CD4-positive, alpha-beta memory T cell (primary cell): ENCODE measurements at regions of chr6 and their contacts with region 1.

Region 1: GRCh38 chr6:31665501-31666336 is at the start of gene CSNK2B:
- DNase-seq: peak; percentile 97 to 99 (median 98)
- H3K4me3 ChIP-seq: peak within 1 kb of the TSS; percentile 94 to 96
- H3K4me3 Mint-ChIP-seq: peak within 1 kb of the TSS; percentile 89 to 100 (median 96)
- H3K27ac ChIP-seq: peak within 1 kb of the TSS; percentile 92
- H3K27ac Mint-ChIP-seq: peak within 1 kb of the TSS; percentile 94 to 100 (median 99)
- H3K4me1 ChIP-seq: peaks cover 59% of the 10 kb centered on the region
- H3K4me1 Mint-ChIP-seq: peaks cover 32 to 67% (median 49%) of the 10 kb centered on the region in 4 donors
- H3K27me3 ChIP-seq: no peaks in the 10 kb centered on the region
- H3K27me3 Mint-ChIP-seq: no peaks in the 10 kb centered on the region
- total RNA-seq, gene CSNK2B: 141 to 148 TPM

Region 2: GRCh38 chr6:31546962-31547726 is 118.6 kb before region 1 on chr6 and contains the start of gene NFKBIL1:
- CTCF ChIA-PET with region 1: interaction called, 3 read pairs
- POLR2A ChIA-PET with region 1: interaction called, 10 read pairs
- intact Hi-C with region 1: loop called (anchors 1 kb)
- DNase-seq: peak; percentile 83 to 91 (median 85)
- H3K4me3 ChIP-seq: peak within 1 kb of the TSS; percentile 55 to 79
- H3K4me3 Mint-ChIP-seq: peak within 1 kb of the TSS; percentile 85 to 93 (median 88)
- H3K27ac ChIP-seq: peak within 1 kb of the TSS; percentile 85
- H3K27ac Mint-ChIP-seq: peak within 1 kb of the TSS; percentile 93 to 99 (median 97)
- H3K4me1 ChIP-seq: peaks cover 45% of the 10 kb centered on the region
- H3K4me1 Mint-ChIP-seq: peaks cover 24 to 49% (median 36%) of the 10 kb centered on the region in 4 donors
- H3K27me3 ChIP-seq: no peaks in the 10 kb centered on the region
- H3K27me3 Mint-ChIP-seq: no peaks in the 10 kb centered on the region
- total RNA-seq, gene NFKBIL1: 9.8 to 13.3 TPM

Region 3: GRCh38 chr6:31702819-31703522 is 37.3 kb after region 1 on chr6 and contains the start of gene ABHD16A:
- CTCF ChIA-PET with region 1: no interaction called
- POLR2A ChIA-PET with region 1: interaction called, 15 read pairs
- intact Hi-C with region 1: loop called (anchors 1 kb)
- DNase-seq: peak; percentile 96 to 98 (median 97)
- H3K4me3 ChIP-seq: peak within 1 kb of the TSS; percentile 70 to 82
- H3K4me3 Mint-ChIP-seq: peak within 1 kb of the TSS; percentile 97 to 99 (median 98)
- H3K27ac ChIP-seq: peak within 1 kb of the TSS; percentile 97
- H3K27ac Mint-ChIP-seq: peak within 1 kb of the TSS; percentile 93 to 99 (median 98)
- H3K4me1 ChIP-seq: peaks cover 28% of the 10 kb centered on the region
- H3K4me1 Mint-ChIP-seq: peaks cover 21 to 44% (median 34%) of the 10 kb centered on the region in 4 donors
- H3K27me3 ChIP-seq: no peaks in the 10 kb centered on the region
- H3K27me3 Mint-ChIP-seq: no peaks in the 10 kb centered on the region
- total RNA-seq, gene ABHD16A: 66.0 to 69.2 TPM

Region 4: DNA sequence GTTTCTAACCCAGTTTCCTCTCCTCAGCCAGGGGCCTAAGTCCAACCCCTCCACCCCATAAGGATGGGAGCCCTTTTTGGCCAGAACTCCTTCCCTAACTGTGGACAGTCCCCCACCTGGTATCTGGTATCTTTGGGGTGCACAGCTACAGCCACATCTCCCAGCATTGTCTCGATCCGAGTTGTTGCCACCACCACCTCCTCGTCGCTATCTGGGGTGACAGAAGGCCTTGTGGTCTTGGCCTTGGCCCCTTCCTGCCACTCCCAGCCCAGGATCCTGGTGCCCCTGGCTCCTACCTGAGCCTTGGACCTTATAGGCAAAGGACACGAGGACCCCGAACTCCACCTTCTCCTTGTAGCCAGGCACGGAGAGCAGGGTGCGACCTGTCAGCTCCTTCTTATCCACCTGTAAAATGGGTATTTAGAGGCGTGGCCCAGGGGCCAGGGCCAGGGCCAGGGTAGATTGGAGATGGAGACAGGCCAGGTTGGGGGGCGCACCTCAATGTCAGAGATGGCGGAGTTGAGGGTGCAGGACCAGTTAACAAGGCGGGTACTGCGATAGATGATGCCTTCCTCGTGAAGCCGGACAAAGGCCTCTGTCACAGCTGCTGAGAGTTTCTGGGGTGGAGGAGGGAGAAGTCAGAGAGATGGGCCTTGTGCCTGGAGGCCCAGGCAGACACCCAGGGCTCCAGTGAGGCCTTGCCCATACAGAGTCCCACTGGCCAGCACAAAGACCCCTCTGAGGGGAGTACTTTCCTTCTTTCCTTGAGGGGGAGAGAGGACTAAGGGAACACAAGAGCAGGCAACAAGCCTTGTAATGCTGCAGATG is 118.6 kb after region 1 on chr6:
- CTCF ChIA-PET with region 1: no interaction called
- POLR2A ChIA-PET with region 1: no interaction called
- intact Hi-C with region 1: no loop called
- DNase-seq: no peak
- H3K4me3 ChIP-seq: no peak overlapping the region
- H3K4me3 Mint-ChIP-seq: no peak overlapping the region
- H3K27ac ChIP-seq: no peak overlapping the region
- H3K27ac Mint-ChIP-seq: peak overlapping the region in 4 of 7 donors; percentile 36 to 52 (median 44)
- H3K4me1 ChIP-seq: no peaks in the 10 kb centered on the region
- H3K4me1 Mint-ChIP-seq: peaks cover 0 to 2% (median under 1%) of the 10 kb centered on the region in 4 donors
- H3K27me3 ChIP-seq: no peaks in the 10 kb centered on the region
- H3K27me3 Mint-ChIP-seq: no peaks in the 10 kb centered on the region

Region 5: DNA sequence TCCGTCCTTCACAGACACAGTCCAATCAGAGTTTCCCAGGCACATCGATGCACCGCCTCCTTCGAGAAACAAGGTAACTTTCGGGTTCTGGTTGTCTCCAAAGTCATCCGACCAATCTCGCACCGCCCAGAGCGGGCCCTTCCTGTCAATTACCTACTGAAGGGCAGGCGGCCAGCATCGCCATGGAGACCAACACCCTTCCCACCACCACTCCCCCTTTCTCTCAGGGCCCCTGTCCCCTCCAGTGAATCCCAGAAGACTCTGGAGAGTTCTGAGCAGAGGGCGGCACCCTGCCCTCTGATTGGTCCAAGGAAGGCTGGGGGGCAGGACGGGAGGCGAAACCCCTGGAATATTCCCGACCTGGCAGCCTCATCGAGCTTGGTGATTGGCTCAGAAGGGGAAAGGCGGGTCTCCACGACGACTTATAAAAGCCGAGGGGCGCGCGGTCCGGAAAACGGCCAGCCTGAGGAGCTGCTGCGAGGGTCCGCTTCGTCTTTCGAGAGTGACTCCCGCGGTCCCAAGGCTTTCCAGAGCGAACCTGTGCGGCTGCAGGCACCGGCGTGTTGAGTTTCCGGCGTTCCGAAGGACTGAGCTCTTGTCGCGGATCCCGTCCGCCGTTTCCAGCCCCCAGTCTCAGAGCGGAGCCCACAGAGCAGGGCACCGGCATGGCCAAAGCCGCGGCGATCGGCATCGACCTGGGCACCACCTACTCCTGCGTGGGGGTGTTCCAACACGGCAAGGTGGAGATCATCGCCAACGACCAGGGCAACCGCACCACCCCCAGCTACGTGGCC is 161.8 kb after region 1 on chr6 and contains the start of gene HSPA1B:
- CTCF ChIA-PET with region 1: interaction called, 3 read pairs
- POLR2A ChIA-PET with region 1: interaction called, 27 read pairs
- intact Hi-C with region 1: no loop called
- DNase-seq: peak; percentile 86 to 89 (median 87)
- H3K4me3 ChIP-seq: peak within 1 kb of the TSS; percentile 67 to 90
- H3K4me3 Mint-ChIP-seq: peak within 1 kb of the TSS; percentile 88 to 98 (median 95)
- H3K27ac ChIP-seq: peak within 1 kb of the TSS; percentile 83
- H3K27ac Mint-ChIP-seq: peak within 1 kb of the TSS; percentile 93 to 99 (median 96)
- H3K4me1 ChIP-seq: peaks cover 45% of the 10 kb centered on the region
- H3K4me1 Mint-ChIP-seq: peaks cover 18 to 55% (median 37%) of the 10 kb centered on the region in 4 donors
- H3K27me3 ChIP-seq: no peaks in the 10 kb centered on the region
- H3K27me3 Mint-ChIP-seq: no peaks in the 10 kb centered on the region
- total RNA-seq, gene HSPA1B: 58.0 to 60.8 TPM

Region 6: GRCh38 chr6:31901953-31902643 is 236.4 kb after region 1 on chr6 and contains the start of gene ZBTB12:
- CTCF ChIA-PET with region 1: no interaction called
- POLR2A ChIA-PET with region 1: interaction called, 5 read pairs
- intact Hi-C with region 1: loop called (anchors 5 kb)
- DNase-seq: peak; percentile 83 to 87 (median 86)
- H3K4me3 ChIP-seq: peak within 1 kb of the TSS; percentile 49 to 78
- H3K4me3 Mint-ChIP-seq: peak within 1 kb of the TSS; percentile 78 to 92 (median 90)
- H3K27ac ChIP-seq: peak within 1 kb of the TSS; percentile 58
- H3K27ac Mint-ChIP-seq: peak within 1 kb of the TSS; percentile 71 to 95 (median 89)
- H3K4me1 ChIP-seq: peaks cover 30% of the 10 kb centered on the region
- H3K4me1 Mint-ChIP-seq: peaks cover 17 to 36% (median 27%) of the 10 kb centered on the region in 4 donors
- H3K27me3 ChIP-seq: no peaks in the 10 kb centered on the region
- H3K27me3 Mint-ChIP-seq: peaks cover 0 to 1% of the 10 kb centered on the region in 2 donors
- total RNA-seq, gene ZBTB12: 2.4 to 2.5 TPM

Region 7: GRCh38 chr6:33200219-33201146 is 1534.8 kb after region 1 on chr6 and contains the starts of genes RXRB and SLC39A7:
- CTCF ChIA-PET with region 1: no interaction called
- POLR2A ChIA-PET with region 1: no interaction called
- intact Hi-C with region 1: loop called (anchors 10 kb)
- DNase-seq: peak; percentile 95 to 99 (median 98)
- H3K4me3 ChIP-seq: peak within 1 kb of the TSS; percentile 99
- H3K4me3 Mint-ChIP-seq: peak within 1 kb of the TSS; percentile 98 to 100 (median 99)
- H3K27ac ChIP-seq: peak within 1 kb of the TSS; percentile 88
- H3K27ac Mint-ChIP-seq: peak within 1 kb of the TSS; percentile 96 to 99 (median 98)
- H3K4me1 ChIP-seq: peaks cover 62% of the 10 kb centered on the region
- H3K4me1 Mint-ChIP-seq: peaks cover 45 to 82% (median 64%) of the 10 kb centered on the region in 4 donors
- H3K27me3 ChIP-seq: no peaks in the 10 kb centered on the region
- H3K27me3 Mint-ChIP-seq: no peaks in the 10 kb centered on the region
- total RNA-seq, gene RXRB: 89.2 to 94.3 TPM
- total RNA-seq, gene SLC39A7: 40.8 to 40.9 TPM